Prostate gland (tissue), 2 donors: ENCODE measurements at regions of chr18 and their contacts with region 1.

Region 1: DNA sequence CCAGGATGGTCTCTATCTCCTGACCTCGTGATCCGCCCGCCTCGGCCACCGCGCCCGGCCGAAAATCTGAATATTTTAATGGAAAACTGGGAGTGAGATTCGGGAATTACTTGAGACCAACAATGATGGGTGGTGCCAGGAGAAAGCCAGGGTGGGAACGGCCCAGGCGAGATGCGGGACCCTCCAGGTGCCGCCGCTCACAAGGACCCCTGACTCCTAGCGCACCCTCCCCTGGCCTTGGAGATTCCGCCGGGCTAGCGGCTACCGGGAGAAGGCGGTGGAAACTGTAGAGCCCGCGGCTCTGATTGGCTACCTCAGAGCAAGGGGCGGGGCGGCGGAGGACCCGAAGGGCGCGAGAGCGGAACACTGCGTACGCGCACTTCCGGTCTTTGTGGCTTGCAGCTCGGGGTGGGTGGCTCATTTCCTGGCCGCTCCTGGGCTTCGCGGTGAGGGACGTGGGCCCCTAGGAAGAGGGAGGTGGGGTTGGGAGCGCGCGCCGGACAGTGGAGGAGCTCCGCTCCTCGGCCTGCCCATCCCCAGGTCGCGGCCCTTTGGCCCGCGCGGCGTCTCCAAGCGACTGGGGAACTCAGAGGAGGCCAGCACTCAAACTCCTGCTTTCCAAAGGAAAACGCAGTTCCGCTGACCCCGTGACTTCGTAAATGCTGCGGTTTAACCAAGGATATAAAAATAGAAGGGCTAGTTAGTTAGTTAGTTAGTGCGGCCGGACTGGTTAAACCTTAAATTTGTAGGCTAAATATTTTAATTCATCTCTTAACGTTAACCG is at the start of gene ZNF397:
- DNase-seq: peak; percentile 97
- H3K4me3 ChIP-seq: peak within 1 kb of the TSS; percentile 77 to 78
- H3K27ac ChIP-seq: peak within 1 kb of the TSS; percentile 92 to 96
- H3K4me1 ChIP-seq: no peaks in the 10 kb centered on the region
- H3K27me3 ChIP-seq: no peaks in the 10 kb centered on the region
- CTCF ChIP-seq: peak in 1 of 4 experiments; percentile 14
- POLR2A ChIP-seq: peak; percentile 93
- total RNA-seq, gene ZNF397: 32.9 TPM

Region 2: GRCh38 chr18:34912010-34912721 is 328.7 kb before region 1 on chr18:
- intact Hi-C with region 1: no loop called
- DNase-seq: no peak
- H3K4me3 ChIP-seq: no peak overlapping the region
- H3K27ac ChIP-seq: no peak overlapping the region
- H3K4me1 ChIP-seq: no peaks in the 10 kb centered on the region
- H3K27me3 ChIP-seq: no peaks in the 10 kb centered on the region
- CTCF ChIP-seq: no peak
- POLR2A ChIP-seq: no peak

Region 3: DNA sequence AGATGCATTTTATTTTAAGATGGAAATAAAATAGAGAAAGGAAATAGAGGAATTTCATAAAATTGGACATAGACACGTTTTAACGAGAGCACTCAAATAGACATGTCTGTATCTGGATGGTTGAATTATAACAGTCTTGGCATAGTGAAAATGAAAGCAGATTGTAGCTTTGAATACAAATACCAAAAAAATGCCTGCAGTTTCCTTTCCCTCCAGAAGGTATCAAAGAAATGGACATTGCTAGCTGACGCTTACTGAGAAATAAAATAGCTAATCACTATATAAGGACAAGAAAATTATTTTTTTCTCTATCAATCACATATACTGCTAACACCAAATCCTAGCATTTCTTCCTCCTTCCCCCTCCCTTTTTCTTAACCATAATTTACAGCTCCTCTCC is 211.1 kb before region 1 on chr18:
- intact Hi-C with region 1: loop called (anchors 5 kb)
- DNase-seq: no peak
- H3K4me3 ChIP-seq: no peak overlapping the region
- H3K27ac ChIP-seq: peak overlapping the region in 1 of 2 donors; percentile 8
- H3K4me1 ChIP-seq: no peaks in the 10 kb centered on the region
- H3K27me3 ChIP-seq: no peaks in the 10 kb centered on the region
- CTCF ChIP-seq: no peak
- POLR2A ChIP-seq: no peak

Region 4: DNA sequence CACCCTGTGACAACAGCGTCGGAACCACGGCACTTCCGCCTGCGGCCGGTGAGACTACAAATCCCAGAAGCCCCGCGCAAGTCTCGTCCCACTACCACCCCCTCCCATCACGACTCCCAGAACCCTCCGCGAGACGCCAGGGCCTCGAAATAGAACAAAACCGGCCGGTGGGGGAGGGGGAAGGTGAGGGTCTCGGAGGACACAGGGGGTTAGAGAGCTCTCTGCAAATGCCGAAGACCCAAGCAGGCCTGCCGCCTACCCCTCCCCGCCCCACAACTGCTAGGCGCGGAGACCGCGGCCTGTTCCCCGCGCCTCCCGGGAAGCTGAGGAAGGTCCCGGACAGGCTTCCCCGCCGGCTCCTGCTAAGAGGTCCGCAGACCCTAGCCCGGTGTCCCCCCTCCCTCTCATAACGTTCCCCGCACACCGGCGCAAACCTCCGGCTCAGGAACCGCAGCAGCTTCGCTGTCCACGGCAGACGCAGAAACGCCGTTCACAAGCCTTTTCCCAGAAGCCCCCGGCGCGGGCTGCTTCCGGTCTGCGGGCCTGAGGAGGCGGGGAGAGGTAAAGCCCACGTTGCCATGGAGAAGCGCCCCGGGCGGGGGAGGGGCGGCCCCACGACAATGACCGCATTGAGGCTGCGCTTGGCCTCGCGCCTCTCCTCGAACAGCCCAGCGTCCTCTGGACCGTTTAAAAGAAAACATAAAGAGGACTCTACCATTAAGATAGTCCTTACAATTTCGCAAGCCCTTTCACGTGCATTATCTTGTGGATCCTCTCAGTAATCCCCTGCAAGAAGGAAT is 103.3 kb after region 1 on chr18 and contains the start of gene ZNF24:
- intact Hi-C with region 1: loop called (anchors 1 kb)
- DNase-seq: peak; percentile 95
- H3K4me3 ChIP-seq: peak within 1 kb of the TSS; percentile 92 to 95
- H3K27ac ChIP-seq: peak within 1 kb of the TSS; percentile 98
- H3K4me1 ChIP-seq: no peaks in the 10 kb centered on the region
- H3K27me3 ChIP-seq: no peaks in the 10 kb centered on the region
- CTCF ChIP-seq: peak in 1 of 4 experiments; percentile 4
- POLR2A ChIP-seq: peak; percentile 69
- total RNA-seq, gene ZNF24: 39.4 to 53.4 TPM